PC-9 (cell line): ENCODE measurements at regions of chr1 and their contacts with region 1.

Region 1: GRCh38 chr1:23004112-23004511 is 11.5 kb downstream of the TEX46 start:
- DNase-seq: peak; percentile 50 to 83
- H3K4me3 ChIP-seq: peak overlapping the region; percentile 58
- H3K27ac ChIP-seq: peak overlapping the region; percentile 92
- H3K4me1 ChIP-seq: peaks cover 66% of the 10 kb centered on the region
- H3K27me3 ChIP-seq: no peaks in the 10 kb centered on the region
- CTCF ChIP-seq: no peak

Region 2: GRCh38 chr1:22239378-22239777 is 764.7 kb before region 1 on chr1:
- CTCF ChIA-PET with region 1: no interaction called
- POLR2A ChIA-PET with region 1: no interaction called
- intact Hi-C with region 1: no loop called
- DNase-seq: peak in 1 of 2 experiments; percentile 29
- H3K4me3 ChIP-seq: no peak overlapping the region
- H3K27ac ChIP-seq: no peak overlapping the region
- H3K4me1 ChIP-seq: peaks cover 6% of the 10 kb centered on the region; the same call in 1 of the 2 replicates
- H3K27me3 ChIP-seq: no peaks in the 10 kb centered on the region
- CTCF ChIP-seq: no peak

Region 3: GRCh38 chr1:23044035-23044434 is 39.9 kb after region 1 on chr1:
- CTCF ChIA-PET with region 1: no interaction called
- POLR2A ChIA-PET with region 1: interaction called, 49 read pairs
- intact Hi-C with region 1: no loop called
- DNase-seq: no peak
- H3K4me3 ChIP-seq: no peak overlapping the region
- H3K27ac ChIP-seq: peak overlapping the region; percentile 44; the same call in 1 of the 2 replicates
- H3K4me1 ChIP-seq: peaks cover 19% of the 10 kb centered on the region
- H3K27me3 ChIP-seq: no peaks in the 10 kb centered on the region
- CTCF ChIP-seq: no peak

Region 4: GRCh38 chr1:23098463-23099170 is 94.5 kb after region 1 on chr1:
- CTCF ChIA-PET with region 1: no interaction called
- POLR2A ChIA-PET with region 1: no interaction called
- intact Hi-C with region 1: no loop called
- DNase-seq: peak; percentile 47 to 55
- H3K4me3 ChIP-seq: no peak overlapping the region
- H3K27ac ChIP-seq: peak overlapping the region; percentile 86
- H3K4me1 ChIP-seq: peaks cover 48% of the 10 kb centered on the region
- H3K27me3 ChIP-seq: no peaks in the 10 kb centered on the region
- CTCF ChIP-seq: peak; percentile 80